ENCODE measurements at regions of chr13 and their contacts with region 1.

Region 1: GRCh38 chr13:100203696-100204367 is 114.9 kb downstream of the PCCA start:
- DNase-seq: no peak
- H3K4me3 Mint-ChIP-seq: peak overlapping the region; percentile 52
- H3K27ac Mint-ChIP-seq: no peak overlapping the region
- H3K4me1 Mint-ChIP-seq: peaks cover 10% of the 10 kb centered on the region
- H3K27me3 Mint-ChIP-seq: no peaks in the 10 kb centered on the region

Region 2: DNA sequence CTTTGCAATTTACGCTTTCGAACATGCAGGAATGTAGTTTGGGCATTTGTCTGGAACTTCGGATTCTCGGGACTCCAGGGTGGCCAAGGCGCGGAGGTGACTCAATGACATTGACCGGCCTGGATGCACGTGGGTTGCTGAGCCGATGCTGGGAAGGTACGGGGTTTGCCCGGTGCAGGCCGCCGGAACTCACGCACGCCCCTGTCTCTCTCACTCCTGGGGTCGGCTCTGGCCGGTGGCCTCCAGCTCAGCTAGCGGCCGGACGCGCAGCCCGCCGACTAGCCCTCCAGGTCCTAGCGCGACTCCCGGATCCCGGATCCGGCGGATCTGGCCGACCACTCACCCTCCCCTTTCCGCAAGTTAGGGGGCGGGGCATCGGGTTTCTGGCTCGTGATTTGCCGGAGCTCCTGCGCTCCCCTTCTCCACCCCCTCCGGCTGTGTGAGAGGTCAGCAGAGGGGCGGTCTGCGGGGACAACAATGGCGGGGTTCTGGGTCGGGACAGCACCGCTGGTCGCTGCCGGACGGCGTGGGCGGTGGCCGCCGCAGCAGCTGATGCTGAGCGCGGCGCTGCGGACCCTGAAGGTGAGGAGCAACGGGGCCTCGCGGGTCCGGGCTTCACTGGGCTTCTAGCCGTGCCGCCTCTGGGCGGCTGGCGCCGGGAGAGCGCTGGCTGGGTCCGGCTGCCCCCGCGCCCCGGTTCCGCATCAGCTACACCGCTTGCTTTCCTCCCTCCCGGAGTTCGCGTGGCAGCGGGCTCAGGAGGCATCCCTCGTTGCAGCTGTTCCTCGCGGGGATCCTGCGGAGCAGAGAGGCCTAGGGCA is 115.0 kb before region 1 on chr13 and contains the start of gene PCCA:
- intact Hi-C with region 1: no loop called
- DNase-seq: peak; percentile 80
- H3K4me3 Mint-ChIP-seq: peak within 1 kb of the TSS; percentile 92
- H3K27ac Mint-ChIP-seq: peak within 1 kb of the TSS; percentile 87
- H3K4me1 Mint-ChIP-seq: peaks cover 24% of the 10 kb centered on the region
- H3K27me3 Mint-ChIP-seq: peaks cover 8% of the 10 kb centered on the region
- total RNA-seq, gene PCCA: 8.6 and 9.7 TPM in 2 replicates

Region 3: GRCh38 chr13:100129605-100130004 is 74.2 kb before region 1 on chr13:
- intact Hi-C with region 1: loop called (anchors 5 kb)
- DNase-seq: peak; percentile 14
- H3K4me3 Mint-ChIP-seq: peak overlapping the region; percentile 44
- H3K27ac Mint-ChIP-seq: peak overlapping the region; percentile 77
- H3K4me1 Mint-ChIP-seq: peaks cover 39% of the 10 kb centered on the region
- H3K27me3 Mint-ChIP-seq: no peaks in the 10 kb centered on the region

Region 4: DNA sequence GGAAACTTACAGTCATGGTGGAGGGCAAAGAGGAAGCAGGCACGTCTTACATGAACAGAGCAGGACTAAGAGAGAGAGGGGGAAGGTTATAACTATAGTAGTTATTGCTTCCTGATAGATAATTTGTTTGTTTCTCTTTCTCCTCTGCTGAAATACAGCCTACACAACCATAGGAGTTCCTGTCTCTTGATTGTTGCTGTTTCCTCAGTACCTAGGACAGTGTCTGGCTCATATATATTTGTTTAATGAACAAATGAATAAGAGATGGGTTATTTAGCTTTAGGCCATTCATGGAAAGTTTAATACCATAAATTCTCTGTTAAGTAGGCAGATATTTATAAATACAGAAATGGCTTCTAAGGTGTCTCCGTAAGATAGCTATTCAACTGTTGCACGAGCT is 19.7 kb before region 1 on chr13:
- intact Hi-C with region 1: no loop called
- DNase-seq: no peak
- H3K4me3 Mint-ChIP-seq: no peak overlapping the region
- H3K27ac Mint-ChIP-seq: no peak overlapping the region
- H3K4me1 Mint-ChIP-seq: peaks cover 25% of the 10 kb centered on the region
- H3K27me3 Mint-ChIP-seq: no peaks in the 10 kb centered on the region